A549 (cell line): ENCODE measurements at regions of chr2 and their contacts with region 1.

Region 1: DNA sequence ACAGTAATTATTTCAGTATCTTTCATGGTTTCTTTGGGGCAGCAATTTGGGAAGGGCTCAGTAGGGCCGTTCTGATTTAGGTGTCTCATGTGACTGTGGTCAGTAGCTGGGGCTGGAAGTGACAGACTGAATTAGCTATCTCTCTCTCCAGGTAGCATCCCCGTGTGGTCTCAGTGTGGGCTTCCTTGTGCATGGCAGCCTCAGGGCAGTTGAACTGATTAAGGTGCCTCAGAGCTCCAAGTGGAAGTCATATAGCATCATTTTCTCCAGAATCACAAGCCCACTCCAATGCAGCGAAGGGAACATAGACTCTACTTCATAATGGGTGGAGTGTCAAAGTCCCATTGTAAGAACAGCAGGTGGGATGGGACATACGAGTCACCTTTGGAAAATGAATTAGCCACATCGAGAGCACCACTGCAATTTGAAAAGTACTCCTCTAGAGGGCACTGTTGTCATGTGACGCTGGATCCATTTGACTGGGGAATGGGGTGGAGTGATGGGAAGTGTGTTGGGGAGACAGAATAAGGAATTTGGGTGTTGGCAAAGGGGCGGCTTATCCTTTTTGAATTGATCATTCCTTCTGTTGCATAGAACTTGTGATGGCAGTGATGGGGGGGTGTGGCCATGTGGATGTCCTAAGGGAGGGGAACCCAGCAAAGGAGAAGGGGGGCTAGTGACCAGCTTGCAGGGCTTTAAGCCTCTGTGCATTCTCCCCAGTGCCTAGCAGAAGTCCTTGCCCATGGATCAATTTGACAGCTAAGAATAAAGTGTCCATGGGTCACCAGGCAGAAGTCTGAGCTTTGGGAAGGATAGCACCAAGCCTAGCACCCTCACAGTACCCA is 39.3 kb upstream of the FAM136A start:
- DNase-seq: peak; percentile 60 to 91
- ATAC-seq: peak; percentile 66 to 88; a peak in 5 of 6 replicates
- H3K4me3 ChIP-seq: no peak overlapping the region
- H3K27ac ChIP-seq: no peak overlapping the region
- H3K4me1 ChIP-seq: peaks cover 9% of the 10 kb centered on the region; the same call in 1 of the 3 replicates
- CTCF ChIP-seq: peak; percentile 98
- EP300 ChIP-seq: no peak
- POLR2A ChIP-seq: no peak
- RAD21 ChIP-seq: peak; percentile 97 to 98

Region 2: DNA sequence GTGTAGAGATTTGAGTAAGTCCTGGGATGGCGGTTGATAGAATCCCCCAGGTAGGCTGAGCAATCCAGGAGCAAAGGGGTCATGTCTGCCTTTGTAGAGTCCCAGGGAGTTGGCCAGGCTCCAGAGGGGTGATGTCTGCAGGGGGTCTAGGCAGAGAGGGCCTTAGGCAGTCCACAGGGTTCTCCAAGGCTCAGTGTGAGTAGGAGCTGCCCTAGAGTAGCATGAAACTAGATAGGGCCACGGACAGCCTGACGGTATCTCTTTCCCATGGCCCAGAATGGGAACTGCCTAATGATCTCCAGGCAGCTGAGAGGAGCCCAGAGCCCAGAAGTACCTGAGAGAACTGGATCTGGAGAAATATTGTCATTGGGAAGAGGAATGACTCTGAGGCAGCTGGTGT is 30.2 kb before region 1 on chr2:
- CTCF ChIA-PET with region 1: interaction called, 53 read pairs
- POLR2A ChIA-PET with region 1: no interaction called
- DNase-seq: no peak
- ATAC-seq: peak in 1 of 2 experiments; percentile 38; a peak in 1 of 6 replicates
- H3K4me3 ChIP-seq: no peak overlapping the region
- H3K27ac ChIP-seq: no peak overlapping the region
- H3K4me1 ChIP-seq: no peaks in the 10 kb centered on the region
- CTCF ChIP-seq: no peak
- EP300 ChIP-seq: no peak
- POLR2A ChIP-seq: no peak
- RAD21 ChIP-seq: no peak

Region 3: GRCh38 chr2:70328921-70329561 is 12.1 kb before region 1 on chr2:
- CTCF ChIA-PET with region 1: interaction called, 80 read pairs
- POLR2A ChIA-PET with region 1: no interaction called
- DNase-seq: peak; percentile 55 to 68
- ATAC-seq: peak; percentile 82 to 85
- H3K4me3 ChIP-seq: no peak overlapping the region
- H3K27ac ChIP-seq: peak overlapping the region in 1 of 2 experiments; percentile 54; a peak in 3 of 6 replicates
- H3K4me1 ChIP-seq: peaks cover 16% of the 10 kb centered on the region
- CTCF ChIP-seq: no peak
- EP300 ChIP-seq: no peak
- POLR2A ChIP-seq: no peak
- RAD21 ChIP-seq: no peak

Region 4: DNA sequence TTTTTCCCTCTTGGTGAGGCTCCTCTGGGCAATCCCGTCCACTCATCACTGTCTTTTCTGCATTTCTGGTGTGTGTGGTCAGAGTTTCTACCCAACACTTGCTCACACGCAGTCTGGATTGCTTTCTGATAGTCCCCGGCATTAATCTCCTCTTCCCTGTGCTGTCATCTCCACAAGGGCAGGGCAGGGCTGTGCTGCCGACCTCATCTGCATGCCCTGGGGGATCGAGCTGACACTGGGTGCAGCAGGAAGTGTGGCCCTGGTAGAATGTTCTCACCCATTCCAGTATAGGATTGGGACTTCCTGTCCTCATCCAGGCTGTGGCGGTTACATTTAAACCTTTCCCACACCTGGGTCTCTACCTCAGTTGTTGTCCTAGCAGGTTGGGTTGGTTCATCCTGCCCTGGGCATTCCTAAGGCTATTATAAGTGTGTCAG is 40.7 kb after region 1 on chr2:
- CTCF ChIA-PET with region 1: interaction called, 11 read pairs
- POLR2A ChIA-PET with region 1: no interaction called
- DNase-seq: peak in 1 of 2 experiments; percentile 20
- ATAC-seq: peak; percentile 44 to 55; a peak in 1 of 6 replicates
- H3K4me3 ChIP-seq: no peak overlapping the region
- H3K27ac ChIP-seq: no peak overlapping the region
- H3K4me1 ChIP-seq: no peaks in the 10 kb centered on the region
- CTCF ChIP-seq: no peak
- EP300 ChIP-seq: no peak
- POLR2A ChIP-seq: no peak
- RAD21 ChIP-seq: no peak

Region 5: GRCh38 chr2:70607121-70607561 is 266.0 kb after region 1 on chr2:
- CTCF ChIA-PET with region 1: interaction called, 63 read pairs
- POLR2A ChIA-PET with region 1: no interaction called
- DNase-seq: no peak
- ATAC-seq: no peak
- H3K4me3 ChIP-seq: no peak overlapping the region
- H3K27ac ChIP-seq: no peak overlapping the region
- H3K4me1 ChIP-seq: peaks cover 10% of the 10 kb centered on the region
- CTCF ChIP-seq: no peak
- EP300 ChIP-seq: no peak
- POLR2A ChIP-seq: no peak
- RAD21 ChIP-seq: no peak

Region 6: DNA sequence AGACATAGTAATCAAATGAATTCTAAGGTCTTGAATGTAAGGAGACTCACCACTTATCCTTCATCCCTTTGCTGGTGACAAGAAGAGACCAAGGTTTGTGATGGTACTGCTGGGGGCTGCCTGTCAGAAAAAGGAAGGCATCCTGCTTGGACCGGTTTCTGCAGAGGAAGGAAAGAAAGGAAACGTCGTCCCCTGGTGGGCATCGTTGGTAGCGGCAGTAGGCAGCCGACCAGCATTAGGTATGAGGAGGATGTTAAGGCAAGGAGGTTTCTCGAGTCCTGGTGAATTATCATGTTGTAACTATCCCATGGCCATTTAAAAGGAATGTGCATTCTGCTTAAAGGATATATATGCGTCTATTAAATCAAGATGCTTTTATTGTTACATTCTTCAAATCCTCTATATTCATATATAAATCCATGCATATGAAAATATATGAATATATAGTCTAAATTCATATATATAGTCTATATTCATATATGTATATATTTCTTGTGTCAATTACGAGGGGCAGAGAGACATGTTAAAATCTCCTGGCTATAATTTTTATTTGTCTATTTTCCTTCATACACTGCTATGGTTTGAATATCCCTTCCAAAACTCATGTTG is 306.8 kb after region 1 on chr2:
- CTCF ChIA-PET with region 1: interaction called, 83 read pairs
- POLR2A ChIA-PET with region 1: no interaction called
- DNase-seq: peak; percentile 48 to 72
- ATAC-seq: peak; percentile 73 to 88
- H3K4me3 ChIP-seq: no peak overlapping the region
- H3K27ac ChIP-seq: no peak overlapping the region
- H3K4me1 ChIP-seq: no peaks in the 10 kb centered on the region
- CTCF ChIP-seq: peak; percentile 98
- EP300 ChIP-seq: no peak
- POLR2A ChIP-seq: no peak
- RAD21 ChIP-seq: peak; percentile 97 to 99